Activated CD4-positive, alpha-beta T cell treated with anti-CD3 and anti-CD28 coated beads for 36 hours (primary cell): ENCODE measurements at regions of chr21 and their contacts with region 1.

Region 1: GRCh38 chr21:42513985-42514882 is 582 bp downstream of the SLC37A1 start:
- DNase-seq: peak; percentile 81
- ATAC-seq: peak; percentile 78
- H3K4me3 Mint-ChIP-seq: peak overlapping the region; percentile 81
- H3K27ac Mint-ChIP-seq: peak overlapping the region; percentile 82
- H3K4me1 Mint-ChIP-seq: peaks cover 13% of the 10 kb centered on the region
- H3K27me3 Mint-ChIP-seq: no peaks in the 10 kb centered on the region

Region 2: GRCh38 chr21:42467140-42467983 is 46.9 kb before region 1 on chr21:
- CTCF ChIA-PET with region 1: interaction called, 3 read pairs
- POLR2A ChIA-PET with region 1: no interaction called
- intact Hi-C with region 1: loop called in 1 of 2 experiments (anchors 5 kb)
- DNase-seq: peak; percentile 43
- ATAC-seq: no peak
- H3K4me3 Mint-ChIP-seq: no peak overlapping the region
- H3K27ac Mint-ChIP-seq: no peak overlapping the region
- H3K4me1 Mint-ChIP-seq: peaks cover 34% of the 10 kb centered on the region
- H3K27me3 Mint-ChIP-seq: no peaks in the 10 kb centered on the region

Region 3: GRCh38 chr21:42695697-42696380 is 181.6 kb after region 1 on chr21:
- CTCF ChIA-PET with region 1: no interaction called
- POLR2A ChIA-PET with region 1: no interaction called
- intact Hi-C with region 1: no loop called
- DNase-seq: no peak
- ATAC-seq: no peak
- H3K4me3 Mint-ChIP-seq: no peak overlapping the region
- H3K27ac Mint-ChIP-seq: no peak overlapping the region
- H3K4me1 Mint-ChIP-seq: no peaks in the 10 kb centered on the region
- H3K27me3 Mint-ChIP-seq: no peaks in the 10 kb centered on the region